A549 (cell line): ENCODE measurements at regions of chr7 and their contacts with region 1.

Region 1: GRCh38 chr7:27160546-27161213 is 4.2 kb upstream of the HOXA7 start:
- DNase-seq: peak; percentile 82 to 87
- ATAC-seq: peak; percentile 70 to 84
- H3K4me3 ChIP-seq: peak overlapping the region; percentile 65
- H3K27ac ChIP-seq: peak overlapping the region; percentile 86
- H3K4me1 ChIP-seq: 0 out of 3 replicates have a peak, but pooled peaks cover 3% of the 10 kb centered on the region
- CTCF ChIP-seq: peak; percentile 93
- EP300 ChIP-seq: no peak
- POLR2A ChIP-seq: no peak
- RAD21 ChIP-seq: peak; percentile 91 to 95

Region 2: DNA sequence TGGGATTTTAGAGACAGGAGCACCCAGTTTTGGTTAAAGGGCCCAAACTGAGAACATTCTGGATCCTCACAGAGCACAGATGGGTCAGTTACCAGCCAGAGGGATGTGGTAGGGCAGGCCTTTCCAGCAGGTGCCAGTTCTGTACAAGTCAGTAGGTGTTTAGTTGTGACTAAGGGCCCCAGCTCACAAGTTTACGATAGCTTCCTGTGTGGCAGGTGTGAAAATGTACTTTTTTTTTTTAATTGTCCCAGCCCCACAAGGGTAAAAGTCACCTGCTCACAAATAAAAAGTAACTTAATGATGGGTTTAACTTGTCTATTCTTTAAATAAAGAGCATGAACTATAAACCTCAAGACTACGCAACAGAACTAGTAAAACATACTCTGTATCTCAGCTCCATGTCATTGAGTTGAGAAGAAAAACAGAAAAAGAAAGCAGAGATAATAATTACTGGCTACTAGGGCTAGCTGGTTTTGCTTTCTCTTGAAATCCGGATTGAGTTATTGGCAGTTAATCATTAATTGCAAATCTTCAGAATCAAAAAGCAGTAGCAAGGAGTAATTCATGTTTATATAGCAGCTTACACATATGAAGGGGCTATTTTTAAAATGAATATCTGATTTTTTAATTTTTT is 993.3 kb before region 1 on chr7:
- CTCF ChIA-PET with region 1: no interaction called
- POLR2A ChIA-PET with region 1: no interaction called
- DNase-seq: no peak
- ATAC-seq: no peak
- H3K4me3 ChIP-seq: no peak overlapping the region
- H3K27ac ChIP-seq: no peak overlapping the region
- H3K4me1 ChIP-seq: no peaks in the 10 kb centered on the region
- CTCF ChIP-seq: no peak
- EP300 ChIP-seq: no peak
- POLR2A ChIP-seq: no peak
- RAD21 ChIP-seq: no peak

Region 3: GRCh38 chr7:26675143-26675887 is 485.4 kb before region 1 on chr7:
- CTCF ChIA-PET with region 1: interaction called, 12 read pairs
- POLR2A ChIA-PET with region 1: no interaction called
- DNase-seq: no peak
- ATAC-seq: peak; percentile 49 to 68; a peak in 3 of 6 replicates
- H3K4me3 ChIP-seq: no peak overlapping the region
- H3K27ac ChIP-seq: no peak overlapping the region
- H3K4me1 ChIP-seq: 0 out of 3 replicates have a peak, but pooled peaks cover 4% of the 10 kb centered on the region
- CTCF ChIP-seq: no peak
- EP300 ChIP-seq: no peak
- POLR2A ChIP-seq: no peak
- RAD21 ChIP-seq: no peak

Region 4: DNA sequence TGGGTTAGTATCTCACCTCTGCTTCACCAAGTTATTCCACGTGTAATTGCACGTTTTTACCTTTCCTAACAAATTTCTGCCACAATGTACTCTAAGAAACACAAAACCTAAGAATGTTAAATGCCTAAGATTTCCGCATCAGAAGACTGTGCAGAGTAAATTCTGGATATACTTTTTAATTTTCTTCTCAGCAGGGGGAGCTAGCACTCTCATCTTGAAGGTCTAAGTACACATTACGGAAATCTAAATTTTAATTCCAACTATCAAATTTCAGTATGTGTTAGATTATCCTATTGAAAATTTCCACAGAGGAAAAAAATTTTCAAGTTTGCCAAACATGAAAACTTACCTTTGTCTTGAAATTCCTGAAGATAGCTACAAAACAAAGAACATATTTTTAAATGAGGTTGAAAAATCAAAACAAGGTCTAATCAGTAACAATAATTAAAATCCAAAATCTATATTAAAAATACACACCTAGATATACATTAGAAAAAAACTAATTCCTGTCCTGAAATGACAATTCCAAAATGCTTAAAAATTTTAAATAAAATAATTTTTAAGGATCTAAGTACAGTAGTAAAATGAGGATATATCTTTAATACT is 306.8 kb before region 1 on chr7:
- CTCF ChIA-PET with region 1: interaction called, 17 read pairs
- POLR2A ChIA-PET with region 1: no interaction called
- DNase-seq: peak in 1 of 2 experiments; percentile 67
- ATAC-seq: peak; percentile 78 to 86; a peak in 5 of 6 replicates
- H3K4me3 ChIP-seq: no peak overlapping the region
- H3K27ac ChIP-seq: no peak overlapping the region
- H3K4me1 ChIP-seq: peaks cover 9% of the 10 kb centered on the region
- CTCF ChIP-seq: peak; percentile 86
- EP300 ChIP-seq: no peak
- POLR2A ChIP-seq: no peak
- RAD21 ChIP-seq: peak; percentile 79 to 80

Region 5: DNA sequence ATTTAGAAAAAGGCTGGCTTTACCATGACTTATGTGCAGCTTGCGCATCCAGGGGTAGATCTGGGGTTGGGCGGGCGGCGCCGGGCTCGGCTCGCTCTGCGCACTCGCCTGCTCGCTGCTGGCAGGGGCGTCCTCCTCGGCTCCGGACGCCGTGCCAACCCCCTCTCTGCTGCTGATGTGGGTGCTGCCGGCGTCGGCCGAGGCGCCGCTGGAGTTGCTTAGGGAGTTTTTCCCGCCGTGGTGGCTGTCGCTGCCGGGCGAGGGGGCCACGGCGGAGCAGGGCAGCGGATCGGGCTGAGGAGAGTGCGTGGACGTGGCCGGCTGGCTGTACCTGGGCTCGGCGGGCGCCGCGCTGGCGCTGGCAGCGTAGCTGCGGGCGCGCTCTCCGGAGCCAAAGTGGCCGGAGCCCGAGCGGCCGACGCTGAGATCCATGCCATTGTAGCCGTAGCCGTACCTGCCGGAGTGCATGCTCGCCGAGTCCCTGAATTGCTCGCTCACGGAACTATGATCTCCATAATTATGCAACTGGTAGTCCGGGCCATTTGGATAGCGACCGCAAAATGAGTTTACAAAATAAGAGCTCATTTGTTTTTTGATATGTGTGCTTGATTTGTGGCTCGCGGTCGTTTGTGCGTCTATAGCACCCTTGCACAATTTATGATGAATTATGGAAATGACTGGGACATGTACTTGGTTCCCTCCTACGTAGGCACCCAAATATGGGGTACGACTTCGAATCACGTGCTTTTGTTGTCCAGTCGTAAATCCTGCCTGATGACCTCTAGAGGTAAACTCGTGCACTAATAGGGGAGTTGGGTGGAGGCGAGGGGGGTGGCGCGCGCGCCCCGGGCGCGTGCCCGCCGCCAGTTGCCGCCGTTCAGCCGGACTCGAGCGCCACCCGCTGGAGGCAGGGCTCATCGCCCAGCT is 17.4 kb before region 1 on chr7 and contains the start of gene HOXA5:
- CTCF ChIA-PET with region 1: interaction called, 160 read pairs
- POLR2A ChIA-PET with region 1: interaction called, 7 read pairs
- DNase-seq: peak; percentile 95 to 96
- ATAC-seq: peak; percentile 78 to 85
- H3K4me3 ChIP-seq: peak within 1 kb of the TSS; percentile 72
- H3K27ac ChIP-seq: peak within 1 kb of the TSS; percentile 79 to 93
- H3K4me1 ChIP-seq: peaks cover 5% of the 10 kb centered on the region; the same call in 2 of the 3 replicates
- CTCF ChIP-seq: peak; percentile 88
- EP300 ChIP-seq: no peak
- POLR2A ChIP-seq: no peak
- RAD21 ChIP-seq: peak; percentile 73 to 91
- polyA plus RNA-seq, gene HOXA5: 6.3 and 6.5 TPM in 2 replicates

Region 6: GRCh38 chr7:27172823-27173510 is 12.3 kb after region 1 on chr7:
- CTCF ChIA-PET with region 1: interaction called, 47 read pairs
- POLR2A ChIA-PET with region 1: no interaction called
- DNase-seq: peak in 1 of 2 experiments; percentile 40
- ATAC-seq: peak; percentile 36 to 45; a peak in 5 of 6 replicates
- H3K4me3 ChIP-seq: peak overlapping the region; percentile 54
- H3K27ac ChIP-seq: peak overlapping the region; percentile 88 to 90
- H3K4me1 ChIP-seq: peaks cover 4% of the 10 kb centered on the region; the same call in 1 of the 3 replicates
- CTCF ChIP-seq: no peak
- EP300 ChIP-seq: no peak
- POLR2A ChIP-seq: no peak; the same call in 1 of the 2 replicates
- RAD21 ChIP-seq: no peak

Region 7: DNA sequence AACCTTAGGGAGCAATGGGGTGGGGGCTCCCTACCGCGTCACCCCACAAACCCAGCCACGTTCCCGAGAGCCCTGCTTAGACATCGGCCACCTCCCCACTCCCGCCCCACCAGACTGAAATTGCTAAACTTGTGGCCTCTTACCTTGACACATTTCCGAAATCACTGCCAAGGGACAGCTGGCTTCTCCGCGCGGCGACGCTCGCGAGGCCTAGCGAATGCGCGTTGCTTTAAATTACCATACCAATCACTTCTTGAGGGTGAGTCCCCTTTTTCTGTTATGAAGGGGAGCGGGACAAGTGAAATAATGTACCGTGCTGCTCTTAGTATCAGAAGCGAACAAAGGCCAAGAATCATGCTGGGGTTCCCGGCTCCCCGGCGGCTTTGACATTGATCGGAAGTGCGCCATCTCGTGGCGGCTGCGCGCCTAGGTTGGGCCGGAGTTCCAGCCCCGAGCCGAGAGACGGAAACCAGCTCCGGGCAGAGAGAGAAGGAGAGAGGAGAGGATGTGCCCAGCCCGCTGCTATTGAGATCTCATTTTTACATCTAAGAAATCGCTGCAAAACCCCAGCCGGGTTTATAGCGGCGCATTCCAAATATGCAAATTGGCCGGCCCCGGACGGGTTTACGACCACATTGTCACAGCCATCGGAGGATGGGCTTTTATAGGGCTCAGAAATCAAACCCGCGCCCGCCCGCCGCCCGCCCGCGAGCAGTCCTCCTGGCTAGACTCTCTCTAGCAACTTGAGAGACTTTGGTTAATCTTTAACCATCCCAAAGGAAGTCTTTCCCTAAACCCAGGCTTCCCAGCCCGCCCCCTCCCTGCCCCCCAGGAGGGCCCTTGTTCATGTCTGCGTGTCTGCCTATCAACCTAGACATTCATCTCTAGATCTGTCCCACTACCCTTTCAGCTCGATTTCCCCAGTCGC is 19.1 kb after region 1 on chr7:
- CTCF ChIA-PET with region 1: interaction called, 47 read pairs
- POLR2A ChIA-PET with region 1: interaction called, 4 read pairs
- DNase-seq: peak; percentile 85 to 95
- ATAC-seq: peak; percentile 85 to 94
- H3K4me3 ChIP-seq: peak overlapping the region; percentile 56
- H3K27ac ChIP-seq: peak overlapping the region; percentile 84 to 87
- H3K4me1 ChIP-seq: peaks cover 21% of the 10 kb centered on the region
- CTCF ChIP-seq: peak; percentile 84
- EP300 ChIP-seq: no peak
- POLR2A ChIP-seq: peak; percentile 31; the same call in 1 of the 2 replicates
- RAD21 ChIP-seq: peak; percentile 10 to 36; a peak in 1 of 5 replicates